GM10248 (cell line): ENCODE measurements at regions of chr3 and their contacts with region 1.

Region 1: DNA sequence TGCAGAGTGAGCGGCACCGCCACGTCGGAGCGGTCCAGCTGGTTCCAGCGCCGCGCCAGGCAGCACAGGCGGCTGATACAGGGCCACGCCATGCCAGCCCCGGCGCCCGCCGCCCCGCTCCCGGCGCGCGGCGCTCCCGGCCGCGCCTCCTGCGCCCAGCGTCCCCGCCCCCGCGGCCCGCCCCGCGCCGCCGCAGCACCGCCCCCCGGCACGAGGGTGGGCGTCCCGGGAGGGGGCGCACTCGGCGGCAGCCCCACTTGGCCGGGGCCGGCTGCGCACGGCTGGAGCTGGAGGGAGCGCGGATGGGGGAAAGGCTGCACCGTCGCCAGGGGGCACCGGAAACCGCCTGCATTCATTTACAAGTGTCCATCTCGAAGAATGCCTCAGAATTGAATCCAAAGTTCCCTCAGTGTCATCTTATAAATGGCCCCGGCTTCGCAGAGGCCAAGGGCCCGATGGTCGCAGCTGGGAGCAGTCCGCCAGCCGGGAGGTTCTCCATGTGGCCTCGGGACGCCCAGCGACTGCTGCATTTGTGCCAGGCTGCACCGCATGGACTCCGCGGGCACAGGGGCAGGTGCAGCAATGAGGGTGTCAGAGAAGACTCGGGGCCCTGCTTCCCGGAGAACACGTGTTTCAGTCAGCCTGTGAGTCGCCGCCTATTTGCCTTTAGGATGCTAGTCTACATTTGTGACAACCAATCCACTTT is at the start of gene MAP6D1:
- DNase-seq: peak; percentile 73
- CTCF ChIP-seq: peak; percentile 29

Region 2: GRCh38 chr3:183210839-183211341 is 614.7 kb before region 1 on chr3:
- CTCF ChIA-PET with region 1: no interaction called
- POLR2A ChIA-PET with region 1: no interaction called
- DNase-seq: no peak
- CTCF ChIP-seq: no peak

Region 3: DNA sequence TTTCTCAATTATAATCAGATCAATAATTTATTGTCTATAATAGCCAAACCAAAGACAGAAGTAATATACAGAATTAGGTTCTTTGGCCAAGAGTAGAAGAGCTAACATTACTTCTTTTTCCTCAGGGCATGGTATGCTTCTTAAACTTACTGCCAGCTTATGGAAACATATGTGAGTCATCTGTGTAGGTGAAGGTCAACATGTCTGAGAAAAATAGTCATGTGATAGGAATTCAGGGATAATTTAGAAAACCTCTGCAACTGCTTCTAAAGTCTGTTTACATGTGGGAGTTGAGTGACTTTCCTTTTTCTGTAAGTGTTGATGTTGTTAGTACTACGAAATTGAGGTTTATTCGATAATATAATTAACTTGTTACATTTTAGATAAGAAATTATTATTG is 19.0 kb after region 1 on chr3:
- CTCF ChIA-PET with region 1: interaction called, 10 read pairs
- POLR2A ChIA-PET with region 1: no interaction called
- DNase-seq: no peak
- CTCF ChIP-seq: no peak